SK-N-SH (cell line): ENCODE measurements at regions of chr3 and their contacts with region 1.

Region 1: GRCh38 chr3:52056968-52057805 is 816 bp upstream of the DUSP7 start:
- DNase-seq: peak; percentile 97
- H3K4me3 ChIP-seq: peak overlapping the region; percentile 65 to 94
- H3K27ac ChIP-seq: peak overlapping the region; percentile 88 to 93
- H3K4me1 ChIP-seq: peaks cover 13 to 66% of the 10 kb centered on the region in 2 experiments
- H3K27me3 ChIP-seq: no peaks in the 10 kb centered on the region
- CTCF ChIP-seq: no peak
- EP300 ChIP-seq: no peak
- RAD21 ChIP-seq: peak; percentile 17; the same call in 1 of the 2 replicates

Region 2: GRCh38 chr3:52023860-52024764 is 33.1 kb before region 1 on chr3:
- CTCF ChIA-PET with region 1: interaction called, 983 read pairs
- POLR2A ChIA-PET with region 1: interaction called, 35 read pairs
- DNase-seq: no peak
- H3K4me3 ChIP-seq: no peak overlapping the region
- H3K27ac ChIP-seq: peak overlapping the region in 1 of 2 experiments; percentile 88; a peak in 2 of 4 replicates
- H3K4me1 ChIP-seq: peaks cover 20 to 82% of the 10 kb centered on the region in 2 experiments; a peak in 2 of 4 replicates
- H3K27me3 ChIP-seq: no peaks in the 10 kb centered on the region
- CTCF ChIP-seq: no peak
- EP300 ChIP-seq: no peak
- RAD21 ChIP-seq: no peak

Region 3: GRCh38 chr3:52041118-52041731 is 16.0 kb before region 1 on chr3:
- CTCF ChIA-PET with region 1: interaction called, 163 read pairs
- POLR2A ChIA-PET with region 1: interaction called, 26 read pairs
- DNase-seq: peak; percentile 93
- H3K4me3 ChIP-seq: no peak overlapping the region
- H3K27ac ChIP-seq: peak overlapping the region in 1 of 2 experiments; percentile 100; a peak in 2 of 4 replicates
- H3K4me1 ChIP-seq: peaks cover 18 to 87% of the 10 kb centered on the region in 2 experiments; a peak in 3 of 4 replicates
- H3K27me3 ChIP-seq: no peaks in the 10 kb centered on the region
- CTCF ChIP-seq: peak; percentile 52
- EP300 ChIP-seq: peak in 1 of 2 experiments; percentile 98; a peak in 2 of 4 replicates
- RAD21 ChIP-seq: peak; percentile 66

Region 4: GRCh38 chr3:52070724-52071621 is 13.8 kb after region 1 on chr3:
- CTCF ChIA-PET with region 1: interaction called, 15 read pairs
- POLR2A ChIA-PET with region 1: interaction called, 11 read pairs
- DNase-seq: peak; percentile 50
- H3K4me3 ChIP-seq: no peak overlapping the region
- H3K27ac ChIP-seq: peak overlapping the region in 1 of 2 experiments; percentile 100; a peak in 2 of 4 replicates
- H3K4me1 ChIP-seq: peaks cover 0 to 60% of the 10 kb centered on the region in 2 experiments; a peak in 2 of 4 replicates
- H3K27me3 ChIP-seq: no peaks in the 10 kb centered on the region
- CTCF ChIP-seq: no peak
- EP300 ChIP-seq: no peak
- RAD21 ChIP-seq: no peak

Region 5: GRCh38 chr3:52108302-52109232 is 51.4 kb after region 1 on chr3:
- CTCF ChIA-PET with region 1: interaction called, 11 read pairs
- POLR2A ChIA-PET with region 1: interaction called, 13 read pairs
- DNase-seq: peak; percentile 75
- H3K4me3 ChIP-seq: no peak overlapping the region
- H3K27ac ChIP-seq: peak overlapping the region in 1 of 2 experiments; percentile 96; a peak in 2 of 4 replicates
- H3K4me1 ChIP-seq: peaks cover 0 to 37% of the 10 kb centered on the region in 2 experiments; a peak in 2 of 4 replicates
- H3K27me3 ChIP-seq: no peaks in the 10 kb centered on the region
- CTCF ChIP-seq: no peak
- EP300 ChIP-seq: peak in 1 of 2 experiments; percentile 50; a peak in 1 of 4 replicates
- RAD21 ChIP-seq: no peak; the same call in 1 of the 2 replicates

Region 6: GRCh38 chr3:52136513-52136912 is 79.3 kb after region 1 on chr3:
- CTCF ChIA-PET with region 1: interaction called, 11 read pairs
- POLR2A ChIA-PET with region 1: interaction called, 3 read pairs
- DNase-seq: peak; percentile 42
- H3K4me3 ChIP-seq: no peak overlapping the region
- H3K27ac ChIP-seq: peak overlapping the region in 1 of 2 experiments; percentile 73; a peak in 2 of 4 replicates
- H3K4me1 ChIP-seq: peaks cover 0 to 22% of the 10 kb centered on the region in 2 experiments; a peak in 1 of 4 replicates
- H3K27me3 ChIP-seq: no peaks in the 10 kb centered on the region
- CTCF ChIP-seq: no peak
- EP300 ChIP-seq: no peak
- RAD21 ChIP-seq: no peak

Region 7: GRCh38 chr3:52423173-52423572 is 366.0 kb after region 1 on chr3:
- CTCF ChIA-PET with region 1: no interaction called
- POLR2A ChIA-PET with region 1: no interaction called
- DNase-seq: no peak
- H3K4me3 ChIP-seq: no peak overlapping the region
- H3K27ac ChIP-seq: no peak overlapping the region
- H3K4me1 ChIP-seq: no peaks in the 10 kb centered on the region; a peak in 1 of 4 replicates
- H3K27me3 ChIP-seq: no peaks in the 10 kb centered on the region
- CTCF ChIP-seq: no peak
- EP300 ChIP-seq: no peak
- RAD21 ChIP-seq: no peak